Activated CD4-positive, alpha-beta memory T cell treated with anti-CD3 and anti-CD28 coated beads for 36 hours (primary cell): ENCODE measurements at regions of chr2 and their contacts with region 1.

Region 1: DNA sequence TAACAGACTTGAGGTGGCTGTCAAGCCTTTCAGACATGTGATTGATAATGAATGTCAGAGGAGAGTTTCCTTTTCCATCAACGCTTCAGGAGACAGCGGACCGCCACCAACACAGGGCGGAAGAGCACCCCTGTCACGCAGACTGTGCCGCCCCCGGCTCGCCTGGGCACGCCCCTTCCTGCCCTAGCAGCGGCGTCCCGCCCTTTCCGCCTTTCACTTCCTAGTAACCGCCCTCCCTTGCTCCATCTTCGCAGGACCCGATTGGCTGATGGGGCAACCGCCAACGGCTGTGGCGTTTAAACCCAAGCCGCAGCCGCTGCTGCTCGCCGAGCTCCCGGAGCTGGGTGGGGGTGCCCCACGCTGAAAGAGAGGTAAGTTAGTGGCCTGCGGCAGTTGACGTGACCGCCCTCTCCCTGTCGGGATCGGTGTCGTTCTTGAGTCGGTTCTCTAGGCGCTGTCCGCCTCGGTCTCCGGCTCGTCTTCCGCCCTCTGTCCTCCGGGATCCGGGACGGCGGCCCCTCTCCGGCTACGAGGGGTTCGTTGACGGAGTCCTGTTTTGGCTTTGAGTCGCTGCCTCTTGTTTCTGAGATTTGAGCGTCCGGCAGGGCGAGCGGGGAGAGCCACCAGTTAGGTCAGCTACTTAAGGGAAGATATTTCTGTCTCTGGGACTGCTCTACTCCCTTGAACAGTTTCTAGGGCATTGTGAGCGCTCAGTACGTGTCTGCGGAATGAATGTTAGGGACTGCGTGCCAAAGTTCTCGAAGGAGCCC is at the start of gene SGO2:
- DNase-seq: peak; percentile 98
- H3K4me3 Mint-ChIP-seq: peak within 1 kb of the TSS; percentile 88
- H3K27ac Mint-ChIP-seq: peak within 1 kb of the TSS; percentile 73
- H3K4me1 Mint-ChIP-seq: peaks cover 20% of the 10 kb centered on the region
- H3K27me3 Mint-ChIP-seq: no peaks in the 10 kb centered on the region
- total RNA-seq, gene SGO2: 40.5 to 40.7 TPM

Region 2: DNA sequence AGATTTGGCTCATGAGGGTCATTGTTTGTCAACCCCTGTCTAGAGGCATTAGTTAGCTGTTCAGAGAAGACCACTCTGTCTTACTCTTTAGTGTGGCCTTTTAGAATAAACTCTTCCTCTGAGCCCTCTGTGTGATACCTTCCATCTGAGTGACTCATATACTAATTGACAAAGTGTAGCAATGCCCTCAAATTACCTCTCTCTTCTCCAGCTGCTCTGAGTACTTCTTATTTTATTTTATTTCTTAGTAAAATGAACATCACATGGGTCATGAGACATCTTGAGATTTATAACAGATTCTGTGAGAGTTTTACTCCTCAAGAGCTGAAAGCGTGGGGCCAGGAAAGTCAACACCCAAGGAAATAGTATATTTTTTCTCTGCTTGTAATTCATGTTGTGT is 83.6 kb before region 1 on chr2:
- CTCF ChIA-PET with region 1: no interaction called
- POLR2A ChIA-PET with region 1: no interaction called
- intact Hi-C with region 1: no loop called
- DNase-seq: no peak
- H3K4me3 Mint-ChIP-seq: no peak overlapping the region
- H3K27ac Mint-ChIP-seq: no peak overlapping the region
- H3K4me1 Mint-ChIP-seq: peaks cover 14% of the 10 kb centered on the region
- H3K27me3 Mint-ChIP-seq: no peaks in the 10 kb centered on the region

Region 3: GRCh38 chr2:200509612-200510433 is 16.2 kb before region 1 on chr2 and contains the start of gene KCTD18:
- CTCF ChIA-PET with region 1: interaction called, 10 read pairs
- POLR2A ChIA-PET with region 1: interaction called, 11 read pairs
- intact Hi-C with region 1: loop called (anchors 1 kb)
- DNase-seq: peak; percentile 93
- H3K4me3 Mint-ChIP-seq: peak within 1 kb of the TSS; percentile 97
- H3K27ac Mint-ChIP-seq: peak within 1 kb of the TSS; percentile 86
- H3K4me1 Mint-ChIP-seq: peaks cover 30% of the 10 kb centered on the region
- H3K27me3 Mint-ChIP-seq: no peaks in the 10 kb centered on the region
- total RNA-seq, gene KCTD18: 13.8 to 14.9 TPM

Region 4: DNA sequence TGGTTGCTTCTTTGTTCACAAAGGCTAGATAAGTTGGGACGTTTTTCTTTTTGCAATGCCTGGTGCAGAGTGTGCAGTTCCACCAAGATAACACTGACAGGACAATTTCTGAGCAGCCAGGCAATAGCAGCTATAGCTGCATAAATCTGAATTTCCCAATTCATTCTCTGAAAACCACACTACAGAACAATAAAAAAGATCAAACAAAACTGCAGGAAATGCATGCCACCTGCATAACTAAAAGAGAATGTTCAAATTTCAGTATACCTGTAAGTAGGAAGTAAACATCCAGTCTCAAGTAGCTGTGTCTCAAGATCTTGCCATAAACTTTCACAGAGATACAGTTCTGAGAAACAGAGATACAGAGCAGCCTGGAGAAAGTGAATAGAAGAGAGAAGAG is 10.9 kb before region 1 on chr2:
- CTCF ChIA-PET with region 1: interaction called, 10 read pairs
- POLR2A ChIA-PET with region 1: interaction called, 11 read pairs
- intact Hi-C with region 1: loop called (anchors 1 kb)
- DNase-seq: no peak
- H3K4me3 Mint-ChIP-seq: no peak overlapping the region
- H3K27ac Mint-ChIP-seq: peak overlapping the region; percentile 2
- H3K4me1 Mint-ChIP-seq: peaks cover 17% of the 10 kb centered on the region
- H3K27me3 Mint-ChIP-seq: no peaks in the 10 kb centered on the region